ENCODE measurements at regions of chr11 and their contacts with region 1.

Region 1: GRCh38 chr11:64304316-64305072 is 830 bp upstream of the ESRRA start:
- DNase-seq: peak; percentile 85
- ATAC-seq: peak; percentile 33
- H3K4me3 ChIP-seq: peak overlapping the region; percentile 53
- H3K27ac ChIP-seq: peak overlapping the region; percentile 38
- H3K4me1 ChIP-seq: peaks cover 12% of the 10 kb centered on the region
- H3K27me3 ChIP-seq: peaks cover 14% of the 10 kb centered on the region
- CTCF ChIP-seq: peak; percentile 80
- POLR2A ChIP-seq: no peak
- RAD21 ChIP-seq: peak; percentile 61

Region 2: DNA sequence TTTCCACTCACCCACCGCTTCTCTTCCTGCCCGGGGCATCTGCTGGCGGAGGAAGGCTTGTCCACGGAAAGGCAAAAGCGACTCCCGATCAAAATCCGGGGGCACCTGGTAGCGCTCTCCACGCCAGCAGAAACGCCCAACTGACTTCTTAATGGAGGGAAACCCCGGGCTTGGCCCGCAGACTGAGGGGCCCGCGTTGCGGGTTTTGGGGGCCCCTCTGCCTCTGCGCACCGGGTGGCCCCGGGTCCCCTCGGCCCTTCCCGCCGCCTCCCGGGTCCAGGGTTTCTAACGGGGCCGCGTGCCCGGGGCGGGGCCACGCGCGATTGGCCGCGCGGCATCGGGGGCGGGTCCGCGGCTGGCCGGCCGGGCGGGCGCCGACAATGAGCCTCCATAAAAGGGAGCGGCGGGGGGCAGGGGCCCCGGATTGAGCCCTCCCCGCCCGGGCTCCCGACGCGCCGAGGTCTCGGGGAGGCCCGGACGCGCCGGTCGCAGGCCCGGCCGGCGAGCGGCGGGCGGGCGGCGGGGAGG is 491.4 kb before region 1 on chr11 and contains the start of gene SPINDOC:
- CTCF ChIA-PET with region 1: no interaction called
- POLR2A ChIA-PET with region 1: no interaction called
- dilution Hi-C with region 1: no loop called
- in situ Hi-C with region 1: no loop called
- intact Hi-C with region 1: no loop called
- DNase-seq: peak; percentile 47
- ATAC-seq: peak; percentile 96
- H3K4me3 ChIP-seq: peak within 1 kb of the TSS; percentile 98
- H3K27ac ChIP-seq: peak within 1 kb of the TSS; percentile 95
- H3K4me1 ChIP-seq: peaks cover 4% of the 10 kb centered on the region
- H3K27me3 ChIP-seq: no peaks in the 10 kb centered on the region
- CTCF ChIP-seq: no peak
- POLR2A ChIP-seq: peak; percentile 83
- RAD21 ChIP-seq: no peak
- total RNA-seq, gene SPINDOC: 10.0 and 11.9 TPM in 2 replicates

Region 3: GRCh38 chr11:64073542-64073941 is 231.0 kb before region 1 on chr11:
- CTCF ChIA-PET with region 1: no interaction called
- POLR2A ChIA-PET with region 1: interaction called, 11 read pairs
- dilution Hi-C with region 1: no loop called
- in situ Hi-C with region 1: no loop called
- intact Hi-C with region 1: no loop called
- DNase-seq: no peak
- ATAC-seq: no peak
- H3K4me3 ChIP-seq: no peak overlapping the region
- H3K27ac ChIP-seq: no peak overlapping the region
- H3K4me1 ChIP-seq: no peaks in the 10 kb centered on the region
- H3K27me3 ChIP-seq: peaks cover 7% of the 10 kb centered on the region; the same call in 1 of the 2 replicates
- CTCF ChIP-seq: no peak
- POLR2A ChIP-seq: no peak
- RAD21 ChIP-seq: no peak

Region 4: DNA sequence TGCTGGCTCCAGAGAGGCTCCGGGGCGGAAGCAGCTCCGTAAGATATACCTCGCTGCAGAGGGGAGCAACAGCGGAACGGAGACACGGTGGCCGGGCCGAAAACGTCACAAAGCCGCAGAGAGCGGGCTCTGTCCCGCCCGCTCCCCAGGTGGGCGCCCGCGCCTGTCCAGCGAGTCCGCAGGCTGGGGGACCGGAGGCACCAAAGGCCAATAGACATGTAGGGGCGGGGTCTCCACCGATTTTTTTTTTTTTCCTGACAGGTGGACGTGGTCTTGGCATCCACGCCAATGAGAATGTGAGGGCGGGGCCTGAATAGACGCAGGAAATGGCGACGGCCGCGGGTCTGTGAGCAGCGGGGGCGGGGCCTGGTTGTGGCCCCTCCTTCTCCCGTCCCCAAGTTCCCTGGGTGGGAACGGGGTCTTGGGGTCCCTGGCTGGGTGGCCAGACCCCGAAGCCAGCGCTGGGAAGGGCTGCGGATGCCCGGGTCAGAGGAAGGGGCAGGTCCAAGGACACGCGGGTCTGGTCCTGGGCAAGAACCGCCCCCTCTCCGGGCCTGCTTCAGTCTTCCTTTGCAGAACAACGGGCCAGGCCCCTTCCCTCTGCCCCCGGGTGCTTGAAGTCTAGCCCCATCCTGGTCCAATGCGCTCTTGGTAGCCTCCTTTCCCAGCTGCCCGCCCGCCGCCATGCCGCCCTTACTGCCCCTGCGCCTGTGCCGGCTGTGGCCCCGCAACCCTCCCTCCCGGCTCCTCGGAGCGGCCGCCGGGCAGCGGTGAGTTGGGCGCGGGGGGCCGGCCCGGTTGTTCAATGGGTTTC is 74.1 kb before region 1 on chr11 and contains the start of gene DNAJC4:
- CTCF ChIA-PET with region 1: interaction called, 3 read pairs
- POLR2A ChIA-PET with region 1: interaction called, 3 read pairs
- dilution Hi-C with region 1: no loop called
- in situ Hi-C with region 1: no loop called
- intact Hi-C with region 1: loop called (anchors 1 kb)
- DNase-seq: peak; percentile 81
- ATAC-seq: peak; percentile 56
- H3K4me3 ChIP-seq: peak within 1 kb of the TSS; percentile 83
- H3K27ac ChIP-seq: peak within 1 kb of the TSS; percentile 51
- H3K4me1 ChIP-seq: peaks cover 20% of the 10 kb centered on the region
- H3K27me3 ChIP-seq: no peaks in the 10 kb centered on the region
- CTCF ChIP-seq: no peak
- POLR2A ChIP-seq: no peak
- RAD21 ChIP-seq: no peak
- total RNA-seq, gene DNAJC4: 2.2 and 3.9 TPM in 2 replicates

Region 5: GRCh38 chr11:64269380-64270234 is 34.9 kb before region 1 on chr11:
- CTCF ChIA-PET with region 1: interaction called, 6 read pairs
- POLR2A ChIA-PET with region 1: no interaction called
- dilution Hi-C with region 1: no loop called
- in situ Hi-C with region 1: no loop called
- intact Hi-C with region 1: loop called (anchors 1 kb)
- DNase-seq: peak; percentile 100
- ATAC-seq: peak; percentile 85
- H3K4me3 ChIP-seq: peak overlapping the region; percentile 56
- H3K27ac ChIP-seq: peak overlapping the region; percentile 86
- H3K4me1 ChIP-seq: peaks cover 11% of the 10 kb centered on the region
- H3K27me3 ChIP-seq: no peaks in the 10 kb centered on the region
- CTCF ChIP-seq: peak; percentile 17; the same call in 1 of the 2 replicates
- POLR2A ChIP-seq: peak; percentile 73
- RAD21 ChIP-seq: no peak; the same call in 1 of the 2 replicates

Region 6: DNA sequence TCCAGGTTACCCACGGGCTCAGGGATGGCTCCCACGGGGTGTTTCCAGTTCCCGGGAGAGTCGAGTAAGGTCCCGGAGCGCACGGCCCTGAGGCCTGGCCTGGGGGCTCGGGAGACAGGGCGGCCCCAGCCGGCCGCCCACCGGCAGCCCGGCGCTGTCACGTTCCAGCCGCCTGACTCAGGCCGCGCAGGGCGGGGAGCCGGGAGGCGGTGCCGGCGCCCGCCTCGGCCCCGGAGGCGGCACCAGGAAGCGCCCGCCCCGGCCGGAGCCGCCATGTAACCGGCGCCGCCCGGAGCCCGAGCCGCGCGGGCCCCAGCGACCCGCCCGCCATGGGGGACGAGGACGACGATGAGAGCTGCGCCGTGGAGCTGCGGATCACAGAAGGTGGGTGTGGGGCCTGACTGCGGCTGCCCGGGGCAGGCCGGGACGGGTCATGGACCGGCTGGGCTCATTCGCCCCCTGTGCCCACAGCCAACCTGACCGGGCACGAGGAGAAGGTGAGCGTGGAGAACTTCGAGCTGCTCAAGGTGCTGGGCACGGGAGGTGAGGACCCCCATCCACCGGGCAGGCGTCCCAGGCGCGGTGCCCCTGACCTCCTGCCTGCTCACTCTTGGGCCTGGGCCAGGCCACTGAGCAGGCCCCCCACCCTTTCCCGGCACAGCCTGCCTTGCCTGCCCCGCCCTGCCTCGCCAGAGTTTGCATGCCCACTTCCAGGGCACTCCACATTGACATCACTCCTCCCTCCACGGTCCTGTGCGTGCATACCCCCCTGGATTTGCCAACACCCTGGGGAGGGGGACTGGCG is 54.6 kb after region 1 on chr11 and contains the start of gene RPS6KA4:
- CTCF ChIA-PET with region 1: interaction called, 13 read pairs
- POLR2A ChIA-PET with region 1: no interaction called
- dilution Hi-C with region 1: no loop called
- in situ Hi-C with region 1: no loop called
- intact Hi-C with region 1: loop called (anchors 1 kb)
- DNase-seq: peak; percentile 58
- ATAC-seq: peak; percentile 88
- H3K4me3 ChIP-seq: peak within 1 kb of the TSS; percentile 98
- H3K27ac ChIP-seq: peak within 1 kb of the TSS; percentile 91
- H3K4me1 ChIP-seq: peaks cover 27% of the 10 kb centered on the region
- H3K27me3 ChIP-seq: no peaks in the 10 kb centered on the region
- CTCF ChIP-seq: no peak
- POLR2A ChIP-seq: peak; percentile 47; the same call in 1 of the 2 replicates
- RAD21 ChIP-seq: no peak
- total RNA-seq, gene RPS6KA4: 43.3 and 52.9 TPM in 2 replicates

Measured in IMR-90 (cell line).